Activated CD4-positive, alpha-beta T cell treated with anti-CD3 and anti-CD28 coated beads, Interleukin-2, amount 10 ng/mL, durations not matched to agents 24 days and 14 days (primary cell): ENCODE measurements at regions of chr1 and their contacts with region 1.

Region 1: GRCh38 chr1:46179138-46180081 is 3.1 kb upstream of the P3R3URF start:
- DNase-seq: peak; percentile 90
- H3K4me3 Mint-ChIP-seq: no peak overlapping the region
- H3K27ac Mint-ChIP-seq: no peak overlapping the region
- H3K4me1 Mint-ChIP-seq: peaks cover 1% of the 10 kb centered on the region
- H3K27me3 Mint-ChIP-seq: peaks cover 4% of the 10 kb centered on the region

Region 2: DNA sequence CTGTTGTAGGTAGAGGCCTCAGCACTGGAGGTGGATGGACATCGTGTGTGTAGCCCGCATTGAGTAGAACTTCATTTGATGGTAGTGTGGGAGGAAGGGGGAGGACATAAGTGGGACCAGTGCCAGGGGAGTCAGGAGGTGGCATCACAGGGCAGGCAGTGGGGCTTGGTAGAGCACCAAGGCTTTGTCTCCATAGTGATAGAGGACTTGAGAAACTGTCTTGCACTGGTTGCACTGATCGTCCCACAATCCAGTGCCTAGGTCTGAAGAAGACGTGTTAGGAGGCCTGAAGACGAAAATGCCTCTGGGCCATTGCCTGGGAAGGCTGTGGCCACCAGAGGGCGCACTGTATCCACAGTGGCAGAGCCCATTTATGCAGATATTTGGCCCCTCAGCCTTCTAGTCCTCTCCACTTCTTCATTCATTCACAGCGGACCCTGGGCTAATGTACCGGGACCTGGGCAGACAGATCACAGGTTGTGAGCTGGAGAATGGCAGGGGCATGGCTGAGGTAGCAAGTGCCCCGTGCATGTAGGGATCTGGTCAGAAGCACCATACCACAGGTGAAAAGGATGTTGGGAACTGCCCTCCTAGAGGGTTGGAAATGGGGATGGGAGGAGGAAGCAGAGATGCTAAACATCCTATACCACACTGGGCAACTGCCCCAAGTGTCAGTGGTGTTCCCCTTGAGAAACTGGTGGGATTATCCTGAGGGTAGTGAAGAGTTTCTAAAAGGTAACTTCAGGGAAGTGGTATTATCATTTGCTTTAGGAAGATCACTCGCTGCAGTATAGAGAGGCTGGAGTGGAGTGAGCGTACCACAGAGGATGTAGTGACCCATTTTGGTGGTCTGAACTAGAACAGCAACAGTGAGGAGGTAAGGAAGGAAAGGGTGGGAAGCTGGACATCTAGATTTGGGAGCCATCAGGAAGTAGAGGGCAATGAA is 142.2 kb before region 1 on chr1:
- intact Hi-C with region 1: loop called (anchors 1 kb)
- DNase-seq: peak; percentile 95
- H3K4me3 Mint-ChIP-seq: no peak overlapping the region
- H3K27ac Mint-ChIP-seq: no peak overlapping the region
- H3K4me1 Mint-ChIP-seq: no peaks in the 10 kb centered on the region
- H3K27me3 Mint-ChIP-seq: no peaks in the 10 kb centered on the region

Region 3: DNA sequence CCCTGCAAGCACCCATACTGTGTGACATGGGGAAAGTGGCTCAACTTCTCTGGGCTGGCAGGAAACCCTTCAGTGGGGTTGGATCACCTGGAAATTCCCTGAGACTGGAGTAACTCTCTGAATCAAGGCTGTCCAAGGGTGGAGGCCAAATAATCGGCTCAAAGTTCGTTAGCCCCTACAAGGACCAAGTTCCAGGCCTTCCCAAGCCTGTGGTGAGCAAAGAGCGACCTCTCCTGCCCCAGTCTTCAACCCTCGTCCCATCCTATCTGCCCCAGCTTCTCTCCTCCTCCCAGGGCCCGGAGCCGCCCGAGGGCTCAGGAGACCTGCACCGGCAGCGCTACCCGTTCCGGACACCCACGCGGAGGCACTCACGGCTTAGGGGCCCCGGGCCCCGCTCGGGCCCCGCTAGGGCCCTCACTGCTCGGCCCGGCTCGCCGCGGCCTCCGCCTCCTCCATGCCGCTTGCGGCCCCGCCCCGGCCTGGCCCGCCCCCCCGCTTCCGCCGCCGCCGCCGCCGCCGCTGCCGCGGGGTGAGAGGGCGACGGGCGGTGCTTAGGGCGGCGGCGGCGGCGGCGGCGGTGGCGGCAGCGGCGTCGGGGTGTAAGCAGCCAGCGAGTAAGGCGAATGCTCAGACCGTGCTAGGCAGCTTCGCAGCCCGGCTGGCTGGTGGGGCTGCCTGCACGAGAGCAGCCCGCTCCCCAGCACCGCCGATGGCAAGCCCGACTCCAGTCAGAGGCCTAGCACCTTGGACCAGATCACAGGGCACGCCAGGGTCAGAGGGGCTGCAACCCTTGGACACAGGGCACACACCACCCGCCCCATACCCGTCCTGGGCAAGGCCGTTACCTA is 18.8 kb after region 1 on chr1 and contains the start of gene POMGNT1:
- intact Hi-C with region 1: loop called (anchors 2 kb)
- DNase-seq: peak; percentile 96
- H3K4me3 Mint-ChIP-seq: peak within 1 kb of the TSS; percentile 89
- H3K27ac Mint-ChIP-seq: peak within 1 kb of the TSS; percentile 85
- H3K4me1 Mint-ChIP-seq: peaks cover 20% of the 10 kb centered on the region
- H3K27me3 Mint-ChIP-seq: peaks cover 2% of the 10 kb centered on the region
- total RNA-seq, gene POMGNT1: 75.1 and 83.0 TPM in 2 replicates

Region 4: DNA sequence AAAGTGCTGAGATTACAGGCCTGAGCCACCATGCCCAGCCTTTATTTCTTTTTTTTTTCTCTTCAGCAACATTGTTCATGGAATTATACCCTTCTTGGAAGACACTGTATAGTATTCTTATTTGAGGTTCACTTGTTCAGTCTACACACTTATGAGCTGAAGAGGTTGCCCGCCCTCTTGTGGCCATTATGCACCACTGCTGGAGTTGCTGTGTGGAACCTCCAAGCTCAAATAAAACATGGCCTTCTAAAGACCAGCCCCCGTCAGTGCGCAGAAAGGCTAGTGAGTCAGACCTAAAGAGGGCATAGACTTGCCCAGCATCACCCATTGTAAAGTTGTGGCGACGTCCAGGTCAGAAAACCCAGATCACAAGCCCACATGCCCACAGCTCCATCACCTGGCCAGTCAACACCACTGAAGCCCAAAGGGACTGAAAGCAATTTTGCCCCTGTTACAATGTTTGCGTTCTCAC is 44.1 kb after region 1 on chr1:
- intact Hi-C with region 1: loop called (anchors 2 kb)
- DNase-seq: peak; percentile 86
- H3K4me3 Mint-ChIP-seq: no peak overlapping the region
- H3K27ac Mint-ChIP-seq: no peak overlapping the region
- H3K4me1 Mint-ChIP-seq: peaks cover 4% of the 10 kb centered on the region
- H3K27me3 Mint-ChIP-seq: no peaks in the 10 kb centered on the region